Activated naive CD4-positive, alpha-beta T cell treated with anti-CD3 and anti-CD28 coated beads for 36 hours (primary cell): ENCODE measurements at regions of chr14 and their contacts with region 1.

Region 1: GRCh38 chr14:61837336-61838229 is 75.4 kb downstream of the SNAPC1 start:
- DNase-seq: peak; percentile 88
- H3K4me3 Mint-ChIP-seq: no peak overlapping the region
- H3K27ac Mint-ChIP-seq: no peak overlapping the region
- H3K4me1 Mint-ChIP-seq: peaks cover 12% of the 10 kb centered on the region
- H3K27me3 Mint-ChIP-seq: no peaks in the 10 kb centered on the region

Region 2: GRCh38 chr14:61269321-61270083 is 568.1 kb before region 1 on chr14:
- CTCF ChIA-PET with region 1: interaction called, 23 read pairs
- intact Hi-C with region 1: loop called (anchors 1 kb)
- DNase-seq: peak; percentile 91
- H3K4me3 Mint-ChIP-seq: peak overlapping the region; percentile 67
- H3K27ac Mint-ChIP-seq: no peak overlapping the region
- H3K4me1 Mint-ChIP-seq: no peaks in the 10 kb centered on the region
- H3K27me3 Mint-ChIP-seq: peaks cover 10% of the 10 kb centered on the region

Region 3: GRCh38 chr14:61461808-61462275 is 375.7 kb before region 1 on chr14:
- CTCF ChIA-PET with region 1: interaction called, 63 read pairs
- intact Hi-C with region 1: loop called (anchors 1 kb)
- DNase-seq: peak; percentile 60
- H3K4me3 Mint-ChIP-seq: peak overlapping the region; percentile 27
- H3K27ac Mint-ChIP-seq: peak overlapping the region; percentile 93
- H3K4me1 Mint-ChIP-seq: peaks cover 71% of the 10 kb centered on the region
- H3K27me3 Mint-ChIP-seq: no peaks in the 10 kb centered on the region

Region 4: DNA sequence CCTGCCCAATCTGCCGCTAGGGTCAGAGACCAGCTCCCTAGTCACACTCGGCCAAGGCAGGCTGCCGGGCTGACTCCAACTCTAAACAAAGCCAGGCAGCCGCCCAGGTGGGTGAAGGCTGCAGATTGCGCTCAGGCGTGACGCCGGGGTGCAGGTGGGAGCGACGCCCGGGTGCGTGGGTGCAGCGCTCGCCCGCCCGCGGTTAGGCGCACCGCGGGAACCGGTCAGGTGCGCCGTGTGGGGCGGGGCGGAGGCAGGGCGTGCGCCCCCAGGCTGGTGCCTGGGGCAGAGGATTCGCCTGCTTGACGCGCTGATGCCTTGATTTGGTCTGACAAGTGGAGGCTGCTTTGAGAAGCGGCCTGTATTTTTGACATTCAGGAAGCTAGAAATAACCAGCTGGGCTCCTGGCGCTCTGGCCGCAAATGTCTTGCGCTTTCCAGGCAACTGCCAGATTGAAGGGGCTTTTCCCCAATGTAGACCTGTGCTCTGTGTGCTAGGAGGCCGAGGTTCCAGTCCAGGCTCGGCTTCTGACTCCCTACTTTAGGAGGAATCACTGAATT is 268.9 kb before region 1 on chr14:
- CTCF ChIA-PET with region 1: interaction called, 3 read pairs
- intact Hi-C with region 1: loop called (anchors 10 kb)
- DNase-seq: peak; percentile 71
- H3K4me3 Mint-ChIP-seq: peak overlapping the region; percentile 73
- H3K27ac Mint-ChIP-seq: peak overlapping the region; percentile 91
- H3K4me1 Mint-ChIP-seq: peaks cover 87% of the 10 kb centered on the region
- H3K27me3 Mint-ChIP-seq: no peaks in the 10 kb centered on the region

Region 5: GRCh38 chr14:61653507-61653906 is 184.1 kb before region 1 on chr14:
- CTCF ChIA-PET with region 1: no interaction called
- intact Hi-C with region 1: no loop called
- DNase-seq: no peak
- H3K4me3 Mint-ChIP-seq: no peak overlapping the region
- H3K27ac Mint-ChIP-seq: no peak overlapping the region
- H3K4me1 Mint-ChIP-seq: peaks cover 29% of the 10 kb centered on the region
- H3K27me3 Mint-ChIP-seq: no peaks in the 10 kb centered on the region

Region 6: DNA sequence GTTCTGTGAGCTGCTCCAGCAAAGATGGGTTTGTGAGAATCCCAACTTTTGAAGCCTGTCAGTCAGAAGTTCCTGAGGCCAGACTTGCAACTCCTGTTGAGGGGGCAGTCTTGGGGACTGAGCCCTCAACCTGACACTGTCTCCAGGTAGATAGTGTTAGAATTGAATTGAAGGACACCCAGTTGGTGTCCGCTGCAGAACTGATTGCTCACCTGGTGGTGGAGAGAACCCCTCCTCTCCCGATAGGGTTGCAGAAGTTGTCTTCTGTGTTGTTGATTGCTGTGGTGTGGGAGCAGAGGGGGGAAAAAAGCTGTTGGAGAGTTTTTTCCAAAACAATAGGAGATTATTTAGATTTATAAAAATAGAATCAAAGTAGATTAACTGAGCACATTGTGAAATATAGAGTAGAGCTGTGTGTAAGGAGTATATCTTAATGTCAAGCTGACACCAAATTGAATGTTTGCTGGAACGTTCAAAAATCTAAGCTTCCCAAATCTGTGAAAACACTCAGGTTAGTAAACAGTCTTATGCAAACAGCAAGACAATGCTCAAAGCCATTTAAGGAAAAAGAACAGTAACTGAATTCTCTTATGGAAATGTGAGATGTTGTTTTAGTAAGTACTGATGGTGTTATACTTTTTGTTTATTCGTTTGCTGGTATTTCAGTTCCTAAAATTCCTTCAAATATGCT is 123.7 kb before region 1 on chr14:
- CTCF ChIA-PET with region 1: interaction called, 13 read pairs
- intact Hi-C with region 1: no loop called
- DNase-seq: no peak
- H3K4me3 Mint-ChIP-seq: peak overlapping the region; percentile 30
- H3K27ac Mint-ChIP-seq: peak overlapping the region; percentile 16
- H3K4me1 Mint-ChIP-seq: peaks cover 92% of the 10 kb centered on the region
- H3K27me3 Mint-ChIP-seq: no peaks in the 10 kb centered on the region

Region 7: DNA sequence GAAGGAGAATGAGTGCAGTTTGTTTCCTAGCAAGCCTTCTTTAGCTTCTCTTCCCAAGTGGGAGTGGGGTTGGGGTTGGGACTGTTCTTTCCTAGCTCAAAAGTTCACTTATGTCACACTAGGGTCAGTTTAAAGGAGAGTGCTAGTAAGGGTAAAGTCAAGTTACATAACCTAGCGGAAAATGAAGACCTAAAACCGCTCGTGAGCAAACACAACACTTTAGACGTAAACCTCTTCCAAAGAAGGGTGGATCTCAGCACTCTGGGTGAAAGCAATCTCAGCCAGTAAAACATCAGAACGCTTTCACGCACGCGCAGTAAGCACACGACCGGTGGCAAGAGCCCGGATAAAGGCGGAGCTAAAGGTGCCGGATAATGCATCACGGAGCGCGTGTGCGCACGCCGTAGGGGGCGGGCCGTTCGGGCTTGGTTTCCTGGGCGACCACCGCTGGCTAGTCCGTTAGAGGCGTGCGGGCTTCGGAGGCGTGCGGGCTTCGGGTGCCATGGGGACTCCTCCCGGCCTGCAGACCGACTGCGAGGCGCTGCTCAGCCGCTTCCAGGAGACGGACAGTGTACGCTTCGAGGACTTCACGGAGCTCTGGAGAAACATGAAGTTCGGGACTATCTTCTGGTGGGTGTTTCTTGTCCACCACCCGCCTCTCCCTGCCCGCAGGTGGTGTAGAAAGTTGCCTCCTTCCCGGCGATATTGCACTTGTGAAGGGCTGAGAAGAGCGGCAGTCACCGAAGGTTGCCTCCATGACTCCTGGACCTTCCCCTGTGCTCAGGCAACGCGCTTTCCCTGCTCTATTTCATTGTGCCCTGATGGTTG is 75.4 kb before region 1 on chr14 and contains the start of gene SNAPC1:
- CTCF ChIA-PET with region 1: interaction called, 15 read pairs
- intact Hi-C with region 1: loop called (anchors 1 kb)
- DNase-seq: peak; percentile 99
- H3K4me3 Mint-ChIP-seq: peak within 1 kb of the TSS; percentile 97
- H3K27ac Mint-ChIP-seq: peak within 1 kb of the TSS; percentile 96
- H3K4me1 Mint-ChIP-seq: peaks cover 40% of the 10 kb centered on the region
- H3K27me3 Mint-ChIP-seq: no peaks in the 10 kb centered on the region
- total RNA-seq, gene SNAPC1: 8.7 to 9.2 TPM

Region 8: GRCh38 chr14:61894452-61895077 is 57.0 kb after region 1 on chr14:
- CTCF ChIA-PET with region 1: interaction called, 4 read pairs
- intact Hi-C with region 1: loop called (anchors 1 kb)
- DNase-seq: peak; percentile 82
- H3K4me3 Mint-ChIP-seq: no peak overlapping the region
- H3K27ac Mint-ChIP-seq: no peak overlapping the region
- H3K4me1 Mint-ChIP-seq: peaks cover 14% of the 10 kb centered on the region
- H3K27me3 Mint-ChIP-seq: no peaks in the 10 kb centered on the region